ENCODE measurements at regions of chr19 and their contacts with region 1.

Region 1: DNA sequence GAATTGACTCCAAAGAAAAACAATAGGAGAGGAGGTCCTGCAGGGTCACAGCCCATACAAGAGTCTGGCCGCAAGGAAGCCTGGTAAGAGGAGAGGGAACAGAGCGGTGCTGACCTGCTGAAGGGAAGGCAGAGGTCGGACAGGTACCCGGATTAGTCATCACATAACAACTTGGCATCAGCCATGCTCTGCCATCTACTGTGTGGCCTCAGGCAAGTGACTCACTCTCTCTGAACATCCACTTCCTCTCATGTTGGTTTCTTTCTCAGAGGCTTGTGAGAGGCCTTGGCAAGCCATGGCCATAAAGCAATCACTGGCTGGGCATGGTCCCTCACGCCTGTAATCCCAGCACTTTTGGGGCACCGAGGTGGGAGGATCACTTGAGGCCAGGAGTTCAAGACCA is 7.4 kb upstream of the CAPNS1 start:
- DNase-seq: peak; percentile 72
- H3K4me3 Mint-ChIP-seq: peak overlapping the region; percentile 30
- H3K27ac Mint-ChIP-seq: peak overlapping the region; percentile 87
- H3K4me1 Mint-ChIP-seq: peaks cover 65% of the 10 kb centered on the region
- H3K27me3 Mint-ChIP-seq: no peaks in the 10 kb centered on the region

Region 2: GRCh38 chr19:35977446-35978222 is 154.9 kb before region 1 on chr19:
- CTCF ChIA-PET with region 1: no interaction called
- POLR2A ChIA-PET with region 1: no interaction called
- DNase-seq: peak; percentile 32
- H3K4me3 Mint-ChIP-seq: no peak overlapping the region
- H3K27ac Mint-ChIP-seq: no peak overlapping the region
- H3K4me1 Mint-ChIP-seq: no peaks in the 10 kb centered on the region
- H3K27me3 Mint-ChIP-seq: peaks cover 2% of the 10 kb centered on the region

Region 3: GRCh38 chr19:36169084-36169760 is 36.7 kb after region 1 on chr19:
- CTCF ChIA-PET with region 1: interaction called, 150 read pairs
- POLR2A ChIA-PET with region 1: interaction called, 10 read pairs
- DNase-seq: no peak
- H3K4me3 Mint-ChIP-seq: no peak overlapping the region
- H3K27ac Mint-ChIP-seq: no peak overlapping the region
- H3K4me1 Mint-ChIP-seq: peaks cover 5% of the 10 kb centered on the region
- H3K27me3 Mint-ChIP-seq: no peaks in the 10 kb centered on the region